Activated naive CD4-positive, alpha-beta T cell treated with anti-CD3 and anti-CD28 coated beads for 36 hours (primary cell): ENCODE measurements at regions of chr16 and their contacts with region 1.

Region 1: DNA sequence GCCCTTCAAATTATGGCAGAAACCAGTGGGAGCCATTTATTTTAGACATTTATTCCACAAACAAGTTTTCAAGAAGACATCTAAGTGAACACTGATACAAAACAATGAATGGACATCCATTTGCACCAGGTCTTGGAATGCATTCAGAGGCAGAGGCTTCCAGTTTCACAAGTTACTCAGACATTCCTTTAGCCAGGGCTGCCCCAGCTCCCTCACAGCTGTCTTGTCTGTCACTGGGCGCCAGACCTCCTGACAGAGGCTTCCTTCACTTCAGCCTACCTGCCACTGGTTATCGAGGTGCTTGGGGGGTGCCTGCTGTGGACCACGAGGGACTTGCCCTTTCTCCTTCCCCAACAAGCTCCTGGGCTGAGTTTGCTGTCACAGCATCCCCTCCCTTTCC is 19.2 kb downstream of the AQP8 start:
- DNase-seq: no peak
- H3K4me3 Mint-ChIP-seq: no peak overlapping the region
- H3K27ac Mint-ChIP-seq: no peak overlapping the region
- H3K4me1 Mint-ChIP-seq: no peaks in the 10 kb centered on the region
- H3K27me3 Mint-ChIP-seq: no peaks in the 10 kb centered on the region

Region 2: GRCh38 chr16:25257504-25257955 is 21.5 kb after region 1 on chr16 and contains the start of gene ZKSCAN2:
- CTCF ChIA-PET with region 1: interaction called, 6 read pairs
- intact Hi-C with region 1: loop called (anchors 1 kb)
- DNase-seq: peak; percentile 87
- H3K4me3 Mint-ChIP-seq: peak within 1 kb of the TSS; percentile 89
- H3K27ac Mint-ChIP-seq: peak within 1 kb of the TSS; percentile 97
- H3K4me1 Mint-ChIP-seq: peaks cover 61% of the 10 kb centered on the region
- H3K27me3 Mint-ChIP-seq: no peaks in the 10 kb centered on the region
- total RNA-seq, gene ZKSCAN2: 4.5 to 5.0 TPM

Region 3: DNA sequence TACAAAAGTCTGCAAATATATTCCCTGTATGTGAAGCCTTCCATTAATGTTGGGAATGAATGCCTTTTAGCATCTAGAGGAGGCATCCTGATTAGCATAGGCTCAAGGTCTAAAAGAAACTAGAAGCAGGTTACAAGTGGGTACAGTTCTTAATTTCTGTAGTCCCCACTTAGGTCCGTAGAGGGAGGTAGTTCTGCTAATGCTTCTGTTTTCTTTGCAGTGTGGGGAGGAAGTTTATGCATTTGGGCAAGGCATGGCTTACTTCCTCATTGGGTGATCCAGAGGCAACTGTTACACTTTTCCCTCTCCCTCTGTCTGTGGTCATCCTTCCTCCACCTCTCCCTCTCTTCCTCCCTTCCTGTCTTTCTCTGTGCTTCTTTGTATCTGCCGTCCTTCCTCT is 130.1 kb after region 1 on chr16:
- CTCF ChIA-PET with region 1: no interaction called
- intact Hi-C with region 1: loop called (anchors 10 kb)
- DNase-seq: no peak
- H3K4me3 Mint-ChIP-seq: no peak overlapping the region
- H3K27ac Mint-ChIP-seq: no peak overlapping the region
- H3K4me1 Mint-ChIP-seq: no peaks in the 10 kb centered on the region
- H3K27me3 Mint-ChIP-seq: peaks cover 7% of the 10 kb centered on the region

Region 4: DNA sequence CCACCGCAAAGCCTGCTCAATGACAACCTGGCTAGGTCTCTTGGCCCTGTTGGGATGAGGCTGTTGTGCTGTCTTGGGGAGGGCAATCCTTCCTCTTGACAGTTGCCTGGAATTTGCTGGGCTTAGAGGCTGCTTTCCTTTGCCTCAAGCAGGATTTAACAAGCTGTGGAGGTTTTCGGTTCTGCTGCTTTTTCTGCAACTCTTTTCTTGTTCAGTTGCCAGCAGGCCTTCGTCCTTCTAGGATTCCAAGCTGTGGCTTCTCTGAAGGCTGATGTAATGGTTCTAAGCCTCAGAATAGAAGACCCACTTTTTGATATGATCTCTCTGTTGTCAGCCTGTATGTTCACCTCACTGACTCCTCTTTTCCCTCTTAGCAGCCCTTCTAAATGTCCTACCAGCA is 306.3 kb after region 1 on chr16:
- CTCF ChIA-PET with region 1: no interaction called
- intact Hi-C with region 1: no loop called
- DNase-seq: no peak
- H3K4me3 Mint-ChIP-seq: no peak overlapping the region
- H3K27ac Mint-ChIP-seq: no peak overlapping the region
- H3K4me1 Mint-ChIP-seq: no peaks in the 10 kb centered on the region
- H3K27me3 Mint-ChIP-seq: no peaks in the 10 kb centered on the region